ENCODE measurements at regions of chr4 and their contacts with region 1.

Region 1: DNA sequence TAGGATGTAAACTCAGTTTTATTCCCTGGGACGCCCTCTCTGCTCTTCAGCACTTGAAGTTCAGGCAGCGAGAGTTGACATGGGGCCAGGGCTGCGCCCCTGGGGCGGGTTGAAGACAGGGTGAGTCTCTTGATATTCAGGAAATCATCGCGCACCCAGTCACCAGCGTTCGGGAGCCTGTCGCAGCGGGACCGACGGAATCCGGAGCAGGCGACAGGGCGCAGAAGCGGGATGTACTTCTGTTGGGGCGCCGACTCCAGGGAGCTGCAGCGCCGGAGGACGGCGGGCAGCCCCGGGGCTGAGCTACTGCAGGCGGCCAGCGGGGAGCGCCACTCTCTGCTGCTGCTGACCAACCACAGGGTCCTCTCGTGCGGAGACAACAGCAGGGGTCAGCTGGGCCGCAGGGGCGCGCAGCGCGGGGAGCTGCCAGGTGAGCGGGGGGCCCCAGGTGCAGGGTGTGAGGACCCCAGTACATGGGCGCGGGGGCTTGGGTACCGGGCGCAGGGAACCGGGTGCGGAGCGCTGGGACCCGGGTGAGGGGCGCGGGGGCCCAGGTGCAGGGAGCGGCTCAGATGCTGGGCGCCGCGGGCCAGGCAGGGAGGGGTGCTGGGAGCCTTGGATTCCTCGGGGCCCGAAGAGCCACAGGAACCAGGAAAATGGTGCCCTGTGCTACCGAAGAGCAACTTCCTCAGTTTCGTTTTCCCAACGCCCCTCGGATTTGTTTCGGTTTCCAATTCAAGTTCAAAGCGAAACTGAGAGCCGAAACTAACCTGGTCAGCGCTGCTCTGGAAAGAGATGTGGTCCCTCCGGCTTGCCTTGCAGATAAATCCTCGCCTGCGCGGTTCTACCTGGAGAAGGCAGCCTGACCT is at the start of gene HERC6:
- DNase-seq: peak; percentile 73 to 81
- ATAC-seq: peak; percentile 95 to 98 (median 97)
- H3K4me3 ChIP-seq: peak within 1 kb of the TSS; percentile 99
- H3K27ac ChIP-seq: peak within 1 kb of the TSS; percentile 76
- H3K4me1 ChIP-seq: no peaks in the 10 kb centered on the region
- H3K27me3 ChIP-seq: no peaks in the 10 kb centered on the region
- CTCF ChIP-seq: peak; percentile 61
- total RNA-seq, gene HERC6: 0.86 to 2.7 (median 1.8) TPM

Region 2: GRCh38 chr4:88352062-88352740 is 26.7 kb before region 1 on chr4:
- intact Hi-C with region 1: no loop called
- DNase-seq: no peak
- ATAC-seq: no peak
- H3K4me3 ChIP-seq: no peak overlapping the region
- H3K27ac ChIP-seq: no peak overlapping the region
- H3K4me1 ChIP-seq: no peaks in the 10 kb centered on the region
- H3K27me3 ChIP-seq: no peaks in the 10 kb centered on the region
- CTCF ChIP-seq: no peak

Region 3: DNA sequence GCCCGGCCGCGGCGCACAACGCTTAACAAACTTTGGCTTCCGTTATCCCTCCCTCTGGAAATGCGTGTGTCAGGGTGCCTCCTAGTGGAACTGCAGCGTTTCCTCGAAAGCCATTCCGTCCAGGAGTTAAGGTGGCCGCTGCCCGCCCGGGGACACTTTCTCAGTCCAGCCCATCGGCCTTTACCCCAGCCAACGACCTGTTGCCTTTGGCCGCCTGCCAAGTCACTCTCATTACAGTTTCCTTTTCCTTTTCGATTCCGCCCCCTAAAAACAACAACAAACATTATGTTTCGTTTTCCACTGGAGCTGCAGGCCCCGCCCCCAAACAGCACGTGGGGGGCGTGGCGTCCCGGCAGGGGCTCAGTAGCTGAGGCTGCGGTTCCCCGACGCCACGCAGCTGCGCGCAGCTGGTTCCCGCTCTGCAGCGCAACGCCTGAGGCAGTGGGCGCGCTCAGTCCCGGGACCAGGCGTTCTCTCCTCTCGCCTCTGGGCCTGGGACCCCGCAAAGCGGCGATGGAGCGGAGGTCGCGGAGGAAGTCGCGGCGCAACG is 77.9 kb after region 1 on chr4 and contains the start of gene HERC5:
- intact Hi-C with region 1: loop called in 1 of 2 experiments (anchors 2 kb)
- DNase-seq: peak; percentile 91 to 93
- ATAC-seq: peak; percentile 87 to 93 (median 92)
- H3K4me3 ChIP-seq: peak within 1 kb of the TSS; percentile 82
- H3K27ac ChIP-seq: peak within 1 kb of the TSS; percentile 60
- H3K4me1 ChIP-seq: no peaks in the 10 kb centered on the region
- H3K27me3 ChIP-seq: no peaks in the 10 kb centered on the region
- CTCF ChIP-seq: peak; percentile 62
- total RNA-seq, gene HERC5: 0.42 to 2.8 (median 1.3) TPM

Region 4: DNA sequence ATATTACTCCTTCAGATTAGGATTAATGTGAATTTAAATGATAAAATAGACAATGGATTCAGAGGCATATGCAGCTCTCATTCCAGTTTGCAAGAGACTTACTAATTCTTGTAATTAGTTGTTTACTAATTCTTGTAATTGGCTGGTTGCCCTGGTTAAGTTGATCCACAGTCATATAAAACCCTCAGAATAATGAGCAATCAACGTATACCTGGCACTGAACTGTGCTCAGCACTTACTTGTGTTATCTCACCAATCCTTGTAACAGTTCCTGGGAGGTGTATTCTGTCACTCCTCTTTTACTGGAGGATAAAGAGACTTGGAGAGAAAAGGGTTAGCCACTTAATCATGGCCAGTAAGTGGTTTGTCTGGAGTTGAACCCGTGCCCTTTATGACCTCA is 88.5 kb after region 1 on chr4:
- intact Hi-C with region 1: no loop called
- DNase-seq: no peak
- ATAC-seq: no peak
- H3K4me3 ChIP-seq: no peak overlapping the region
- H3K27ac ChIP-seq: no peak overlapping the region
- H3K4me1 ChIP-seq: no peaks in the 10 kb centered on the region
- H3K27me3 ChIP-seq: no peaks in the 10 kb centered on the region
- CTCF ChIP-seq: no peak

Region 5: DNA sequence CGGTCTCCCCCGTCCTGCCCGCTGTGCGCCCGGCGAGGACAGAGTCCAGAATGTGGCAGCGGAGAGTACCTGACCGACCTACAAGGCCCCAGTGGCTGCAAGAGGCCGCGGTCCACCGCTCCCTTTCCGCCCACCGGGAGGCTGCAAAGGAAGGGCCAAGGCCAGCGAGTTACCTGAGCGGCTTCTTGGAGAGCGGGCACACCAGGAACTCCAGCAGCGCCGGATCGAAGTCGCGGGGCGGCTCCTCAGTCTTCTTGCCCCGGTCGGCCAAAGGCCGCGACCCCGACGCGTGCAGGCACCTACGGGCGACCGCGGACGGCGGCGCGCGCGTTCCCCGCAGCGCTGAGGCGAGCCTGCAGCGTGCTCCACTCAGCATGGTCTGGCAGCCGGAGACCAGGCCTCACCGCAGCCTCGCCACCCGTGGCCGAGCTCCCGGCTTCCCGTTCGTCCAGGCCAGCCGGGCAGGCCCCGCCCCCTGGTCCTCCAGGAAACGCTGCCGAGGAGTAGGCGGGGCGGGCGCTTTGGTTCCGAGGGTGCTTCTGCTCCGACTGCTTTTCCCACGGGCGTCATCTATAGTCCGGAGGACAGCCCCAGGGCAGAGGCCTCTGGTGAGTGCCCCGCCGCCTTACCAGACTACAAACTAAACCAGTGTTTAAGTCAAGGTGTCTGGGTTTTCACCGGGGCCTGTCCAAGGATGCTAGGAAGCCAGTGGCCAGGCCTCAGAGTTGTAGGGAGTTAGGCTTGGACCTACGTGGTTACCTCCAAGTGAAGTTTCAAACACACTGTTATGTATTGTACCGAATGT is 144.6 kb after region 1 on chr4 and contains the start of gene PYURF:
- intact Hi-C with region 1: loop called in 1 of 2 experiments (anchors 2 kb)
- DNase-seq: peak; percentile 97
- ATAC-seq: peak; percentile 97 to 98 (median 97)
- H3K4me3 ChIP-seq: peak within 1 kb of the TSS; percentile 96
- H3K27ac ChIP-seq: peak within 1 kb of the TSS; percentile 95
- H3K4me1 ChIP-seq: peaks cover 12% of the 10 kb centered on the region
- H3K27me3 ChIP-seq: no peaks in the 10 kb centered on the region
- CTCF ChIP-seq: no peak
- total RNA-seq, gene PYURF: 51.8 to 82.8 (median 58.3) TPM

Region 6: GRCh38 chr4:88549815-88550214 is 170.9 kb after region 1 on chr4:
- intact Hi-C with region 1: no loop called
- DNase-seq: no peak
- ATAC-seq: no peak
- H3K4me3 ChIP-seq: no peak overlapping the region
- H3K27ac ChIP-seq: no peak overlapping the region
- H3K4me1 ChIP-seq: no peaks in the 10 kb centered on the region
- H3K27me3 ChIP-seq: peaks cover 0 to 2% (median 0%) of the 10 kb centered on the region in 3 donors
- CTCF ChIP-seq: no peak

Measured in psoas muscle (tissue), 8 donors.